Astrocyte of the spinal cord (primary cell): ENCODE measurements at regions of chrX and their contacts with region 1.

Region 1: GRCh38 chrX:11143931-11144678 is 33.0 kb downstream of the HCCS start:
- DNase-seq: peak; percentile 77
- H3K4me3 ChIP-seq: no peak overlapping the region
- CTCF ChIP-seq: peak; percentile 42

Region 2: GRCh38 chrX:10189317-10190268 is 954.5 kb before region 1 on chrX:
- in situ Hi-C with region 1: loop called (anchors 25 kb)
- DNase-seq: peak; percentile 64
- H3K4me3 ChIP-seq: no peak overlapping the region
- CTCF ChIP-seq: peak; percentile 76

Region 3: DNA sequence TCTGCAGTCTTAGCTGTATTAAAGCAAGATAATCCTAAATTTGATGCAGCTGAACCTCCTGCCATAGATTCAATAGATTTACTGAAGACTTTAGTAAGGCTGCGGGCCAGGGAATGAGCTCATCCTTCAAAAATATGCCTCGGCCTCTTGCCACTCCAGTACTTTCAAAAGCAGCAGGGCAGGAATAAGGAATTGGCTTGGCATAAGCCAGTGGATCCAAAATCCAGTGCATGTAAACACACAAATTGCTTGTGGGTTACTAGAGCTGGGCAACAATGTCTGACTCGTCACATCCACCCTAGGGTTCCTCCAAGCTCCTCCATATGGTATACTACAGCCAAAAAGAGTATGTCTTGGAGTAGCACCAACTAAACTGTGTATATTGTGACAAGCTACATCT is 314.1 kb after region 1 on chrX:
- in situ Hi-C with region 1: no loop called
- DNase-seq: no peak
- H3K4me3 ChIP-seq: no peak overlapping the region
- CTCF ChIP-seq: no peak

Region 4: DNA sequence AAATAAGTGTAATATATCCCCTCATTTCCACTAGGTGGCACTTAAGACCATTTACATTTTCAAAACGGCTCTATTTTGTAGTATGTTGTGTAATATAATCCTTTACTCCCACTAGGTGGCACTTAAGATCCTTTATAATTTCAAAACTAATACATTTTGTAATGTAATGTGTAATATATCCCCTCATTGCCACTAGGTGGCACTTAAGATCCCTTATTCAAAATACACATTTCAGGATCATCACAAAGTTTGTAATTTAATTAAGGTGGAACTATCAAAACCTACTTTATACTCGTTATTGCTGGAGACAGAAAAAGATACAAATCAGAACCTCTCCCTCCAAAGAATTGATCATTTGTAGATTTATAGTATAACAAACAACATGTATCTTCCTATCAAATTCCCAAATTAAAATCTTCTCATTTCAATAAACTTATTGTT is 389.1 kb after region 1 on chrX:
- in situ Hi-C with region 1: loop called (anchors 25 kb)
- DNase-seq: peak; percentile 88
- H3K4me3 ChIP-seq: no peak overlapping the region
- CTCF ChIP-seq: peak; percentile 58